ENCODE measurements at regions of chr3 and their contacts with region 1.

Region 1: GRCh38 chr3:188788621-188789081 is 383.1 kb upstream of the TPRG1 start:
- DNase-seq: peak; percentile 89
- ATAC-seq: peak; percentile 97
- H3K4me3 Mint-ChIP-seq: no peak overlapping the region
- H3K27ac Mint-ChIP-seq: no peak overlapping the region
- H3K4me1 Mint-ChIP-seq: peaks cover 2% of the 10 kb centered on the region
- H3K27me3 Mint-ChIP-seq: no peaks in the 10 kb centered on the region

Region 2: GRCh38 chr3:187919048-187919447 is 869.6 kb before region 1 on chr3:
- CTCF ChIA-PET with region 1: no interaction called
- POLR2A ChIA-PET with region 1: interaction called, 6 read pairs
- intact Hi-C with region 1: loop called (anchors 1 to 2 kb)
- DNase-seq: peak; percentile 69
- ATAC-seq: peak; percentile 50
- H3K4me3 Mint-ChIP-seq: peak overlapping the region; percentile 59
- H3K27ac Mint-ChIP-seq: peak overlapping the region; percentile 86
- H3K4me1 Mint-ChIP-seq: peaks cover 70% of the 10 kb centered on the region
- H3K27me3 Mint-ChIP-seq: peaks cover 2% of the 10 kb centered on the region

Region 3: GRCh38 chr3:188294823-188295487 is 493.7 kb before region 1 on chr3:
- CTCF ChIA-PET with region 1: no interaction called
- POLR2A ChIA-PET with region 1: no interaction called
- intact Hi-C with region 1: loop called in 1 of 2 experiments (anchors 2 kb)
- DNase-seq: peak; percentile 29
- ATAC-seq: peak; percentile 37
- H3K4me3 Mint-ChIP-seq: no peak overlapping the region
- H3K27ac Mint-ChIP-seq: peak overlapping the region; percentile 69
- H3K4me1 Mint-ChIP-seq: peaks cover 74% of the 10 kb centered on the region
- H3K27me3 Mint-ChIP-seq: no peaks in the 10 kb centered on the region

Region 4: GRCh38 chr3:188584162-188584529 is 204.5 kb before region 1 on chr3:
- CTCF ChIA-PET with region 1: no interaction called
- POLR2A ChIA-PET with region 1: no interaction called
- intact Hi-C with region 1: loop called in 1 of 2 experiments (anchors 1 kb)
- DNase-seq: peak; percentile 43
- ATAC-seq: peak; percentile 60
- H3K4me3 Mint-ChIP-seq: no peak overlapping the region
- H3K27ac Mint-ChIP-seq: no peak overlapping the region
- H3K4me1 Mint-ChIP-seq: peaks cover 12% of the 10 kb centered on the region
- H3K27me3 Mint-ChIP-seq: no peaks in the 10 kb centered on the region

Region 5: GRCh38 chr3:188749010-188749617 is 39.5 kb before region 1 on chr3:
- CTCF ChIA-PET with region 1: interaction called, 3 read pairs
- POLR2A ChIA-PET with region 1: no interaction called
- intact Hi-C with region 1: loop called (anchors 1 kb)
- DNase-seq: peak; percentile 59
- ATAC-seq: no peak
- H3K4me3 Mint-ChIP-seq: no peak overlapping the region
- H3K27ac Mint-ChIP-seq: no peak overlapping the region
- H3K4me1 Mint-ChIP-seq: peaks cover 30% of the 10 kb centered on the region
- H3K27me3 Mint-ChIP-seq: no peaks in the 10 kb centered on the region

Region 6: DNA sequence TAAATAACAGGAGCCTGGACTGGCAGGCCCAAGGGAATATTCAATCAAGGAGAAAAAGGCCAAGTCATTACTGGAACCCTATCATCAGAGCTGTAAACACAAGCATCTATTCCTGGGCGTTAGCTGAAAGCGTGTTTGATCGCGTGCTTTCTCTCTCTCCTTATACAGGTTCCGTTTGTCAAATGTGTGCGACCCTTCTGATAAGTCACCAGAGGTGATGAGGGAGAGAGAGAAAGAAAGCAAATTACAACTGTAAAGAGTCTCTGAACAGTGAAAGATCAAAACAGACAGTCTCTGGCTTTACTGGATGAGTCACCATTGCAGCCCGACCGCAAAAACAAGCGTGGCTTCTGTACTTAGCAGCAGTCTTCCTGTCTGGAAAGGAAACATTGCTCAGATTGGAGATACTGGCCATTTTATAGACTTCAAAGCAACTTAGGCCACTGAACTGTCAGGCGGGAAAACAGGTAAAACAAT is 343.6 kb after region 1 on chr3:
- CTCF ChIA-PET with region 1: no interaction called
- POLR2A ChIA-PET with region 1: no interaction called
- intact Hi-C with region 1: loop called in 1 of 2 experiments (anchors 5 kb)
- DNase-seq: peak; percentile 88
- ATAC-seq: peak; percentile 96
- H3K4me3 Mint-ChIP-seq: peak overlapping the region; percentile 24
- H3K27ac Mint-ChIP-seq: peak overlapping the region; percentile 58
- H3K4me1 Mint-ChIP-seq: peaks cover 21% of the 10 kb centered on the region
- H3K27me3 Mint-ChIP-seq: no peaks in the 10 kb centered on the region